Caco-2 (cell line): ENCODE measurements at regions of chr11 and their contacts with region 1.

Region 1: GRCh38 chr11:123407130-123407995 is 22.7 kb upstream of the GRAMD1B start:
- DNase-seq: peak; percentile 83 to 87
- H3K4me3 ChIP-seq: no peak overlapping the region
- H3K4me3 Mint-ChIP-seq: no peak overlapping the region
- H3K27ac Mint-ChIP-seq: no peak overlapping the region
- H3K4me1 ChIP-seq: peaks cover 16% of the 10 kb centered on the region
- H3K4me1 Mint-ChIP-seq: peaks cover 7% of the 10 kb centered on the region
- H3K27me3 ChIP-seq: peaks cover 9% of the 10 kb centered on the region
- H3K27me3 Mint-ChIP-seq: peaks cover 23% of the 10 kb centered on the region
- CTCF ChIP-seq: peak; percentile 93 to 98

Region 2: DNA sequence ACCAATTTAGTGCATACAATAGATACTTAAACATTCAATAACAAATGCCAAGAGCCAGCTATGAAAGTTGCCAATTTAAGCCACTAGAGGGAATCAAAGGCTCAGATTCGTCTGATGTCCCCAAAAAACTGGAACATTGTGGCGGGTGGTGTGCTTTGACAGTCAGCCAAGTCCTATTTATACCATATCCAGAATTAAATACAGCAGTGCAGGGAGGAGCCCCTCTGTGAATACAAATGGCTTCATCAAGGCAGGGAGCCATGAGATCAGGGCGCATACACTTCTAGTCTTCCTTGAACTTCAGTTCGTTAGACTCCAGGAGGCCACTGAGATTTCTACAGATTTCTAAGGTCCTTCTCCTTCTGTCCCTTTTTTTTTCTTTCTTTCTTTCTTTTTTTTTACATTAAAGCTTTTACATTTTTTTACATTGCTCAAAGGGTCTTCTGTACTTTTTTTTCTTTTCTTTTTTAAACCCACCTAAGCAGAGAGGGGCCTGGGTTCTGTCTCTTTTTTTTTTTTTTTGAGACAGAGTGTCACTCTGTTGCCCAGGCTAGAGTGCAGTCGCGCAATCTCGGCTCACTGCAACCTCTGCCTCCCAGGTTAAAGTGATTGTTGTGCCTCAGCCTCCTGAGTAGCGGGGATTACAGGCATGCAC is 303.9 kb before region 1 on chr11:
- CTCF ChIA-PET with region 1: interaction called, 9 read pairs
- POLR2A ChIA-PET with region 1: no interaction called
- intact Hi-C with region 1: loop called (anchors 2 kb)
- DNase-seq: peak; percentile 53 to 69
- H3K4me3 ChIP-seq: no peak overlapping the region
- H3K4me3 Mint-ChIP-seq: no peak overlapping the region
- H3K27ac Mint-ChIP-seq: no peak overlapping the region
- H3K4me1 ChIP-seq: peaks cover 10% of the 10 kb centered on the region
- H3K4me1 Mint-ChIP-seq: peaks cover 10% of the 10 kb centered on the region
- H3K27me3 ChIP-seq: no peaks in the 10 kb centered on the region
- H3K27me3 Mint-ChIP-seq: no peaks in the 10 kb centered on the region
- CTCF ChIP-seq: peak; percentile 83 to 91

Region 3: GRCh38 chr11:123301696-123302400 is 105.5 kb before region 1 on chr11:
- CTCF ChIA-PET with region 1: interaction called, 3 read pairs
- POLR2A ChIA-PET with region 1: no interaction called
- intact Hi-C with region 1: loop called (anchors 2 kb)
- DNase-seq: peak; percentile 62 to 84
- H3K4me3 ChIP-seq: peak overlapping the region; percentile 9; the same call in 1 of the 2 replicates
- H3K4me3 Mint-ChIP-seq: peak overlapping the region; percentile 9
- H3K27ac Mint-ChIP-seq: no peak overlapping the region
- H3K4me1 ChIP-seq: no peaks in the 10 kb centered on the region
- H3K4me1 Mint-ChIP-seq: no peaks in the 10 kb centered on the region
- H3K27me3 ChIP-seq: peaks cover 6% of the 10 kb centered on the region
- H3K27me3 Mint-ChIP-seq: peaks cover 26% of the 10 kb centered on the region
- CTCF ChIP-seq: peak; percentile 80 to 95

Region 4: GRCh38 chr11:123434262-123434661 is 26.9 kb after region 1 on chr11:
- CTCF ChIA-PET with region 1: interaction called, 22 read pairs
- POLR2A ChIA-PET with region 1: no interaction called
- intact Hi-C with region 1: loop called (anchors 2 kb)
- DNase-seq: peak; percentile 42 to 51
- H3K4me3 ChIP-seq: no peak overlapping the region
- H3K4me3 Mint-ChIP-seq: no peak overlapping the region
- H3K27ac Mint-ChIP-seq: no peak overlapping the region
- H3K4me1 ChIP-seq: peaks cover 7% of the 10 kb centered on the region
- H3K4me1 Mint-ChIP-seq: peaks cover 6% of the 10 kb centered on the region
- H3K27me3 ChIP-seq: no peaks in the 10 kb centered on the region; the same call in 1 of the 2 replicates
- H3K27me3 Mint-ChIP-seq: peaks cover 21% of the 10 kb centered on the region
- CTCF ChIP-seq: peak; percentile 37 to 46

Region 5: GRCh38 chr11:123448823-123449222 is 41.5 kb after region 1 on chr11:
- CTCF ChIA-PET with region 1: interaction called, 3 read pairs
- POLR2A ChIA-PET with region 1: no interaction called
- intact Hi-C with region 1: loop called (anchors 5 kb)
- DNase-seq: no peak
- H3K4me3 ChIP-seq: no peak overlapping the region
- H3K4me3 Mint-ChIP-seq: no peak overlapping the region
- H3K27ac Mint-ChIP-seq: no peak overlapping the region
- H3K4me1 ChIP-seq: no peaks in the 10 kb centered on the region
- H3K4me1 Mint-ChIP-seq: no peaks in the 10 kb centered on the region
- H3K27me3 ChIP-seq: no peaks in the 10 kb centered on the region
- H3K27me3 Mint-ChIP-seq: peaks cover 14% of the 10 kb centered on the region
- CTCF ChIP-seq: no peak

Region 6: DNA sequence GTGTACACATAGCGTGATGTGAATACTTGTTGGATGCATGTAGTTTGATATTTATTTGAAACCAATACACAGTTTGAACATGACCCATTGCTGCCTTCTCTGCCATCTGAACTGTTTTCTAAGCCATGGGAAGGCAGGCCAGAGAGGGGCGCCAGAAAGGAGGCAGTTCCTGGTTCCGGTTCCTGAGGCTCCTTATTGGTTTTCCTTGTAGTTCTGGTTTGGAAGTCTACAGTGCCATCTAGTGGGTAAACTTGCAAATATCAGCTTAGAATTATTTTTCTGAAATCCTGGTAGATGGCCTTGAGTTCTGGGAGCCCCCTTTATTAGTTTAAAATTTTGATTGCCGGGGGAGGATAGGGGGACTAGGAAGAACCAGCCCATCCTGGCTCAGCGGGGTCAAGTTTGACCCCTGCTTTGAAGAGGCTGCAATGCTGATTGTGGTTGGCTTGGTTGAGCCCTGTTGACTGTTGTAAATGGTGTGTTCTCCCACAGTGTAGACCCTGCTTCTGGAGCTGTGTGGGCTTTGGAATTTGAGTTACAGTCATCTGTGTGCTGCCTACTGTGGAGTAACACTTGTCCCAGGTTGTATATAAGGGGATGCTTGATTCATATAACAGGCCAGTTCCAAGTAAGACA is 71.1 kb after region 1 on chr11:
- CTCF ChIA-PET with region 1: interaction called, 170 read pairs
- POLR2A ChIA-PET with region 1: interaction called, 3 read pairs
- intact Hi-C with region 1: loop called (anchors 1 kb)
- DNase-seq: peak; percentile 71 to 77
- H3K4me3 ChIP-seq: no peak overlapping the region
- H3K4me3 Mint-ChIP-seq: no peak overlapping the region
- H3K27ac Mint-ChIP-seq: no peak overlapping the region
- H3K4me1 ChIP-seq: no peaks in the 10 kb centered on the region
- H3K4me1 Mint-ChIP-seq: no peaks in the 10 kb centered on the region
- H3K27me3 ChIP-seq: peaks cover 3% of the 10 kb centered on the region; the same call in 1 of the 2 replicates
- H3K27me3 Mint-ChIP-seq: peaks cover 18% of the 10 kb centered on the region
- CTCF ChIP-seq: peak; percentile 86 to 87

Region 7: DNA sequence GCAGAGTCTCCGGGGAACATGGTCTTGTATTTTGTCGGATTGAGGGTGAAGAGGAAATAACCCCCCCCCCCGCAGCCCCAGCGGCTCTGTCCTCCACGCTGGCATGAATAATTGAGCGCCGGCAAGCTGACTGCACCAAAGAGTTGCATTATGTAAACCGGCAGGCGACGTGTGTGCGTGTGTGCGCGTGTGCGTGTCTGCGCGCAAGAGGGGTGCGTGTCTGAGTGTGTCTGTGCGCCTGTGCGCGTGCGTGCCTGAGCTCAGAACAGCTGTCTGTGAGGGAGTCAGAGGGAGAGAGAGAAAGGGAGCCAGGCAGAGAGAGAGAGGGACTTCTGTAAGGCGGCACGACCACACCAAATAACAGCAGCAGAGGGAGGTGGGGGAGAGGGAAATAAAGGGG is 152.6 kb after region 1 on chr11:
- CTCF ChIA-PET with region 1: interaction called, 5 read pairs
- POLR2A ChIA-PET with region 1: no interaction called
- intact Hi-C with region 1: loop called (anchors 1 kb)
- DNase-seq: no peak
- H3K4me3 ChIP-seq: no peak overlapping the region
- H3K4me3 Mint-ChIP-seq: peak overlapping the region; percentile 46
- H3K27ac Mint-ChIP-seq: no peak overlapping the region
- H3K4me1 ChIP-seq: no peaks in the 10 kb centered on the region
- H3K4me1 Mint-ChIP-seq: no peaks in the 10 kb centered on the region
- H3K27me3 ChIP-seq: peaks cover 3% of the 10 kb centered on the region; the same call in 1 of the 2 replicates
- H3K27me3 Mint-ChIP-seq: peaks cover 29% of the 10 kb centered on the region
- CTCF ChIP-seq: no peak